Heart right ventricle (tissue), 16 donors: ENCODE measurements at regions of chr7 and their contacts with region 1.

Region 1: DNA sequence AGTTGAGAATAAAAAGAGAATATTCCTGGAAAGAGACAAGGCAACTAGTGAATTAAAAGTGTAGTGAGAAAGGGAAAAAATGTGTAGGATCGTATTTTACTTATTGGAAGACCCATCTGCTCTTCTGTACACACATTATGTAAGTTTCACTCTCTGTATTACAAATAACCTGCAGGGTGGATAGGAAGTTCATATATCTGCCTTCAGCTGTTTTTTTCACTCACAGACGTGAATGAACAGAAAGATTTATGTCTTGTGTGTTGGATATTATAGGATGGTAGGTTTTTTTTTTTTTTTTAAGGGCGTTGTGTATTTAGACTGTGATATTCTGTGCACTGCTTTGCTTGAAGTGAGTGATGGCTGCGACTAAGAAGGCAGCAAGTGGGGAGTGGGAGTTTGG is 266.5 kb downstream of the AUTS2 start:
- DNase-seq: no peak
- ATAC-seq: no peak
- H3K4me3 ChIP-seq: no peak overlapping the region
- H3K27ac ChIP-seq: no peak overlapping the region
- H3K4me1 ChIP-seq: peaks cover 0 to 7% (median 0%) of the 10 kb centered on the region in 9 donors
- H3K27me3 ChIP-seq: no peaks in the 10 kb centered on the region
- CTCF ChIP-seq: no peak

Region 2: DNA sequence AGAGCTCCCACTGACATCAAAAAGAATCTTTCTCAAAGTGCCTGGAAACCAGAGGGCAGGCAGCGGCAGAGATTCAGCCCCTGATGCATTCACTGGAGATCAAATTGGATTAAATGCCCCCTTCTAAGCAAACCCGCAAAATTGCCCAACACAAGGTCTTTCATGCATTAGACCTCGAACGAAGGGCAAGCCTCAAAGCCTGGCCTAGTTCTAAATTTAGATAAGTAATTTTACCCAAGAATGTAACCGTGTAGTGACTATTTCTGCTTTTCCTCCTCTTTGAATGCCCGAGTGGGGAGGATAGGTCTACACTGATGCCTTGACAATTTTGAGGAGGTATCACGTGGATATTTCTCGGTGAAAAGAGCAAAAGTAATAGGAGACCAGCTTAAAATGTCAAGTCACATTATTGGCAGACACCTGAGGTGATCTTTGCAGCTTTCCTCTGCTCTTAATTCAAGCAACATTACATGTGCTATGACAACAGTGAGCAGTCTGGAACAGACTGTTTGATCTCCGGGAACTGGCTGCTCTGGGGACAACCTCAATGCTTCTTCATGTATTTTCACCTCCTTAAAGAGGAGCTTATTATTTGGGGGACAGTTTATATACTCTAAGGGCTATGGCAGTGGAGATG is 1530.1 kb before region 1 on chr7:
- intact Hi-C with region 1: loop called in 1 of 10 experiments (anchors 10 kb)
- DNase-seq: no peak
- ATAC-seq: peak in 1 of 8 donors; percentile 39
- H3K4me3 ChIP-seq: no peak overlapping the region
- H3K27ac ChIP-seq: no peak overlapping the region
- H3K4me1 ChIP-seq: no peaks in the 10 kb centered on the region
- H3K27me3 ChIP-seq: no peaks in the 10 kb centered on the region
- CTCF ChIP-seq: no peak

Region 3: DNA sequence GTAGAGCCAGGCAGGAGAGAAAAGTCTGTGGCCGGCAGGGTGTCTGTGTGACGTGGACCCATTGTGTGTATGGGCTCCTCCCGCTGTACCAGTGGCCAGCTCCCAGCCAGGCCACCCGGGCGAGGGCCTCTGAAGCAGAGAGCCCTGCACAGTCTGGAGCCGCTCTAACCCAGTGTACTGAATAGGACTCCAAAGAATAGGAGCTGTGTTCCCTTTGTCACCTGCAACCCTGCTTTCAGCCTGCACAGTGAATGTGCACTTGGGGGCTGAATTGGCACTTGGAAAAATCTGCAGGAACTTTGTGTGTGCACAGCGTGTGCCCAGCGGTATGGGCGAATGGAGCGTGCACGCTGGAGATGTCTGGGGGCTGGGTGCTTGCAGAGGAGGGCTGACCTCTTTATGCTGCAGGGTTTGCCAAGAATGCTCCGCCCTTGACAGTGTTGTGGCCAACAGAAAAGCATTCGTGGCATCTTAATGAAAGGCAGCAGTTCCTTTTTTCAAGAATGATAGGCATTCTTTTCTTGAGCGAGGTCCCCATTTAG is 50.3 kb before region 1 on chr7:
- intact Hi-C with region 1: loop called in 1 of 10 experiments (anchors 5 kb)
- DNase-seq: peak; percentile 25 to 36
- ATAC-seq: peak; percentile 74 to 90 (median 79)
- H3K4me3 ChIP-seq: no peak overlapping the region
- H3K27ac ChIP-seq: peak overlapping the region in 1 of 10 donors; percentile 2
- H3K4me1 ChIP-seq: peaks cover 0 to 54% (median 22%) of the 10 kb centered on the region in 9 donors
- H3K27me3 ChIP-seq: no peaks in the 10 kb centered on the region
- CTCF ChIP-seq: no peak

Region 4: GRCh38 chr7:69906283-69906995 is 41.6 kb after region 1 on chr7:
- intact Hi-C with region 1: no loop called
- DNase-seq: no peak
- ATAC-seq: no peak
- H3K4me3 ChIP-seq: no peak overlapping the region
- H3K27ac ChIP-seq: no peak overlapping the region
- H3K4me1 ChIP-seq: peaks cover 0 to 6% (median 0%) of the 10 kb centered on the region in 9 donors
- H3K27me3 ChIP-seq: no peaks in the 10 kb centered on the region
- CTCF ChIP-seq: no peak